ENCODE measurements at regions of chr9 and their contacts with region 1.

Region 1: GRCh38 chr9:121299467-121300234 is 31.7 kb downstream of the GSN start:
- DNase-seq: no peak
- ATAC-seq: peak; percentile 49
- H3K4me3 ChIP-seq: peak overlapping the region; percentile 67 to 80 (median 76)
- H3K27ac ChIP-seq: peak overlapping the region; percentile 94
- H3K4me1 ChIP-seq: peaks cover 93% of the 10 kb centered on the region
- H3K27me3 ChIP-seq: no peaks in the 10 kb centered on the region
- CTCF ChIP-seq: peak; percentile 36; the same call in 1 of the 2 replicates
- EP300 ChIP-seq: no peak
- POLR2A ChIP-seq: peak in 1 of 2 experiments; percentile 40; a peak in 1 of 4 replicates
- RAD21 ChIP-seq: no peak; the same call in none of the 2 replicates

Region 2: DNA sequence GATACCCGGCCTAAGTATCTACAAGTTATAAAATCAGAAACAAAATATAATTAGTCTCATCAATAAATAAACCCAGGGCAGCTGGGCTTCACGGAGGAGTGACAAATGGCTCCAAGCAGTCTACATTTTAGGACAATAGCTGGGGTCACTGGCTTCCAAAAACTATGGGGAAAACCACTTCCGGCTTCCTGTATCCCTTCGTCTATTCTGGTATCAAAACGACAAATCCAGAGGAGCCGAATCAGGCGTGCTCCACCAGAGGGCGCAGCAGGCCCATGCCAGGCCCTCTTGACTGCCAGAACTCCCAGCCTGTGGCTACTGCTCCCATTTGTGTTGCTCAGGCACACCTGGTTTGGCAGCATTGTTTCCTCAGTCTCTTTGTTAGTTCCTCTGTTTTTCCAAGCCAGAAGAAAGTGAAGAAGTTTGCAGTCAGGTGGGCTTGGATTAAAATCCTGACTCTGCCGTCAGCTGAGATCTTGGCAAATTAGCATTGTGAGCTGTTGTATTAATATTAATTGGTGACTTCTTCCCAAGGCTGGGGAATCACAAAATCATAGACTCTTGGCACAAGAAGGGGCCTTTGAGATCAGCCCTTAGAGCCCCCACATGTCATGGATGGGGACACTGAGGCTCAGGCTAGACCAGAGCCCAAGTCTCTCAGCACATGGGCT is 86.4 kb before region 1 on chr9:
- CTCF ChIA-PET with region 1: no interaction called
- POLR2A ChIA-PET with region 1: no interaction called
- in situ Hi-C with region 1: no loop called
- intact Hi-C with region 1: loop called (anchors 2 kb)
- DNase-seq: peak; percentile 77
- ATAC-seq: peak; percentile 96
- H3K4me3 ChIP-seq: peak overlapping the region in 1 of 3 experiments; percentile 18; a peak in 1 of 6 replicates
- H3K27ac ChIP-seq: no peak overlapping the region
- H3K4me1 ChIP-seq: peaks cover 8% of the 10 kb centered on the region
- H3K27me3 ChIP-seq: no peaks in the 10 kb centered on the region
- CTCF ChIP-seq: peak; percentile 96
- EP300 ChIP-seq: no peak
- POLR2A ChIP-seq: no peak
- RAD21 ChIP-seq: peak; percentile 94

Region 3: DNA sequence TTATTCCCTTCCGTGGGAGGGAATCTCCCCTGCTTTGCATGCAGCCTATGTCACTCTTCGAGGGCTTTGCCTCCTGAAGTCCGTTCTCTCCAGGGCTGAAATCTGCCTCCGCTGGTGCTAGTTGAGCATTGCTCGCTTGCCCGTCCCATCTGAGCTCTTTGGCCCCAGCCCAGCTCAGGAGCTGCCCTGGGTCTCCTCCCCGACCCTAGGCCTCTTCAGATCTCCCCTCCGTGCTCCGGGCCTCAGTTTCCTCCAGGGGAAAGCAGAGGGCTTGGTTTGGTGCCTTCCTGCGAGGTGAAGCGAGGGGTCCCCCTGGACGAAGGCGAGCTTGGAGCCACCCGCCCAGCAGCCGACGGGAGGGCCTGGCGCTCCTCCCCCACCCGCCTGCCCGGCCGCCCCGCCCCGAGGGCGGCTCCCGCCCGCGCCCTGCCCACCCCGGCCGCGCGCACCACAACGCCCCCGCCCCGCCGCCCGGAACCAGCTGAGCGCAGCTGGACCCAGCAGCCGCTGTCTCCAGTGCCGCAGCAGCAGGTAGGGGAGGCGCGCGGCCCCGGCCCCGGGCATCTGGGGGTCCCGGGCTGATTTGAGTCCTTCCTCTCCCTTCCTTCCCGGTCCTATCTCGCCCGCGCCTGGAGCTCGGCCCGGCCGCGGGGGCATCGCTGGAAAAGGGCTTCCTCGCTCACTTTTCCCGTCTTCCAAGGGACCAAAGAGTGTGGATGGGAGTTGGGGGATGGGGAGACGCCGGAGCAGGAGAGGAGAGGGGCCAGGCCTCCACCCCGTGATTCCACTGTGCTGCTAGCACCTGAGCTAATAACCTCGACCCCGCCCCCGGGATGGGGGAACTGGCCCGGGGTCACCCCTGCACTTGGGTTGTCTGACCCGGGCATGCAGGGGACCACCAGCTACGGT is 31.7 kb before region 1 on chr9 and contains the start of gene GSN:
- CTCF ChIA-PET with region 1: no interaction called
- POLR2A ChIA-PET with region 1: interaction called, 17 read pairs
- in situ Hi-C with region 1: no loop called
- intact Hi-C with region 1: no loop called
- DNase-seq: peak; percentile 47
- ATAC-seq: peak; percentile 90
- H3K4me3 ChIP-seq: peak within 1 kb of the TSS; percentile 69 to 84 (median 82)
- H3K27ac ChIP-seq: no peak within 1 kb of the TSS
- H3K4me1 ChIP-seq: peaks cover 34% of the 10 kb centered on the region
- H3K27me3 ChIP-seq: peaks cover 0 to 18% of the 10 kb centered on the region in 2 experiments; a peak in 3 of 5 replicates
- CTCF ChIP-seq: 0 out of 2 replicates have a peak, but pooled peaks have one; percentile 16
- EP300 ChIP-seq: no peak
- POLR2A ChIP-seq: peak in 1 of 2 experiments; percentile 64; a peak in 2 of 4 replicates
- RAD21 ChIP-seq: no peak
- total RNA-seq, gene GSN: 126 and 307 TPM in 2 replicates

Region 4: GRCh38 chr9:121278535-121279261 is 21.0 kb before region 1 on chr9:
- CTCF ChIA-PET with region 1: interaction called, 3 read pairs
- POLR2A ChIA-PET with region 1: interaction called, 398 read pairs
- in situ Hi-C with region 1: no loop called
- intact Hi-C with region 1: loop called (anchors 1 kb)
- DNase-seq: no peak
- ATAC-seq: peak; percentile 63
- H3K4me3 ChIP-seq: no peak overlapping the region
- H3K27ac ChIP-seq: no peak overlapping the region
- H3K4me1 ChIP-seq: peaks cover 58% of the 10 kb centered on the region
- H3K27me3 ChIP-seq: no peaks in the 10 kb centered on the region; a peak in 1 of 5 replicates
- CTCF ChIP-seq: peak; percentile 91
- EP300 ChIP-seq: no peak
- POLR2A ChIP-seq: no peak
- RAD21 ChIP-seq: peak; percentile 82

Region 5: GRCh38 chr9:121286973-121287741 is 12.5 kb before region 1 on chr9:
- CTCF ChIA-PET with region 1: no interaction called
- POLR2A ChIA-PET with region 1: interaction called, 398 read pairs
- in situ Hi-C with region 1: no loop called
- intact Hi-C with region 1: loop called (anchors 1 kb)
- DNase-seq: peak; percentile 86
- ATAC-seq: peak; percentile 72
- H3K4me3 ChIP-seq: peak overlapping the region; percentile 32 to 58 (median 33); a peak in 4 of 6 replicates
- H3K27ac ChIP-seq: peak overlapping the region; percentile 89
- H3K4me1 ChIP-seq: peaks cover 88% of the 10 kb centered on the region
- H3K27me3 ChIP-seq: no peaks in the 10 kb centered on the region
- CTCF ChIP-seq: peak; percentile 68
- EP300 ChIP-seq: peak in 1 of 2 experiments; percentile 90; a peak in 2 of 4 replicates
- POLR2A ChIP-seq: no peak
- RAD21 ChIP-seq: 0 out of 2 replicates have a peak, but pooled peaks have one; percentile 38

Region 6: DNA sequence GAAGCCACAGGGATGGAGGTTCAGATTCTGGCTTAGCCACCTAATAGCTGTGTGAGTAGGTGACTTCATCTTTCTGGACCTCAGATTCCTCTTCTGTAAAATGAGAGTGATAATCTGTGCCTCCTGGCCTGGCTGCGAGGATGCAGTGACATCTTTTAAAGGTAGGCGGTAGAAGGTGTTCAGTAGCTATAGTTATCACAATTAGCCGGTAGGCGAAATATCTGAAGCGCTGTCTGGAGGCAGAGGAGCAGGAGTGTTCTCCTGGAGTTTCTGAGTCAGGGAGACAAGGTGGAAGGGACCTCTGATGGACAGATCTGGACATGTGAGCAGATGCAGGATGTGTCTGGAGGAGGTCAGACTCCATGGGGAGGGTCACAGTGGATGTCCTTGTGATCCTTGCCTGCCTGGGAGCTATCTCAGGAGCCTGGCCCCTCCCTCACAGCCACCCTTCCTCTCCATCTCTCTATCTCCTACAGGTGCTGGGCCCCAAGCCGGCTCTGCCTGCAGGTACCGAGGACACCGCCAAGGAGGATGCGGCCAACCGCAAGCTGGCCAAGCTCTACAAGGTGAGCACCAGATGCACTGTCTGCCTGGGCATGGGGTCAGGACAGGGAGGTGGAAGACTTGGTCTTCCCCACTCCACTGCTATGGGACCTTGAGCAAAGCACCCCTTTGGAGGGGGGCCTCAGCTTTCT is 14.0 kb after region 1 on chr9:
- CTCF ChIA-PET with region 1: no interaction called
- POLR2A ChIA-PET with region 1: interaction called, 13 read pairs
- in situ Hi-C with region 1: no loop called
- intact Hi-C with region 1: no loop called
- DNase-seq: no peak
- ATAC-seq: no peak; the same call in 2 of the 3 replicates
- H3K4me3 ChIP-seq: no peak overlapping the region
- H3K27ac ChIP-seq: no peak overlapping the region
- H3K4me1 ChIP-seq: no peaks in the 10 kb centered on the region
- H3K27me3 ChIP-seq: no peaks in the 10 kb centered on the region
- CTCF ChIP-seq: no peak
- EP300 ChIP-seq: no peak
- POLR2A ChIP-seq: no peak
- RAD21 ChIP-seq: no peak